PC-3 (cell line): ENCODE measurements at regions of chr3 and their contacts with region 1.

Region 1: DNA sequence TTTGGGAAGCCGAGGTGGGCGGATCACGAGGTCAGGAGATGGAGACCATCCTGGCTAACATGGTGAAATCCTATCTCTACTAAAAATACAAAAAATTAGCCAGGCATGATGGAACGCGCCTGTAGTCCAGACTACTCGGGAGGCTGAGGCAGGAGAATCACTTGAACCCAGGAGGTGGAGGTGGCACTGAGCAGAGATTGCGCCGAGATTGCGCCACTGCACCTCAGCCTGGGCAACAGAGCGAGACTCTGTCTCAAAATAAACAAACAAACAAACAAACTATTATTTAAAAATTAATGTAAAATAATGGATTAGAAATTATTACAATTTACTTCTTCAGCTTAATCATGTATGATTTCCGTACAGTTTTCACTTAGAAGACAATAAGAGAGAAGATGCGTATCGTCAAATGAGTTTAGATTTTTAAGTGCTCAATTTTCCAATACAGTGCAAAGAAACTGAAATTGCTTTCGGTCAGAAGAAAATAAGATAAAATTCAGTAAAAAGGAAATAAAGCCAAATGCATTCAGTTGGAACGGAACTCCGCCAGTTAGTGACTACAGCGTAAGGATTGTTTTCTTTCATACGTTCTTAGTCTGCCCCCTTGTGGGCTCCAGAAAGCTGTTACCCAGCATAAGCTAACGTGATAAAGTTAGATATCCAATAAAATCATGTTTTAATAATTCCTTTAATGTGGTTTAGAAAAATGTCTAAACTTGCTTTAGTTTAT is 24.8 kb downstream of the AADAC start:
- DNase-seq: peak; percentile 88
- ATAC-seq: peak; percentile 85
- H3K4me3 ChIP-seq: no peak overlapping the region
- H3K27ac ChIP-seq: no peak overlapping the region
- H3K4me1 ChIP-seq: peaks cover 34% of the 10 kb centered on the region
- H3K27me3 ChIP-seq: no peaks in the 10 kb centered on the region
- CTCF ChIP-seq: peak; percentile 92

Region 2: GRCh38 chr3:151290673-151291072 is 548.1 kb before region 1 on chr3:
- CTCF ChIA-PET with region 1: no interaction called
- POLR2A ChIA-PET with region 1: no interaction called
- intact Hi-C with region 1: loop called (anchors 1 kb)
- DNase-seq: peak; percentile 78
- ATAC-seq: peak; percentile 71
- H3K4me3 ChIP-seq: no peak overlapping the region
- H3K27ac ChIP-seq: no peak overlapping the region
- H3K4me1 ChIP-seq: no peaks in the 10 kb centered on the region
- H3K27me3 ChIP-seq: no peaks in the 10 kb centered on the region
- CTCF ChIP-seq: peak; percentile 91

Region 3: GRCh38 chr3:151468284-151468917 is 370.3 kb before region 1 on chr3:
- CTCF ChIA-PET with region 1: interaction called, 3 read pairs
- POLR2A ChIA-PET with region 1: no interaction called
- intact Hi-C with region 1: loop called (anchors 1 kb)
- DNase-seq: peak; percentile 90
- ATAC-seq: peak; percentile 98
- H3K4me3 ChIP-seq: no peak overlapping the region
- H3K27ac ChIP-seq: no peak overlapping the region
- H3K4me1 ChIP-seq: no peaks in the 10 kb centered on the region
- H3K27me3 ChIP-seq: no peaks in the 10 kb centered on the region
- CTCF ChIP-seq: peak; percentile 93

Region 4: GRCh38 chr3:151609491-151609890 is 229.3 kb before region 1 on chr3:
- CTCF ChIA-PET with region 1: no interaction called
- POLR2A ChIA-PET with region 1: no interaction called
- intact Hi-C with region 1: no loop called
- DNase-seq: no peak
- ATAC-seq: no peak
- H3K4me3 ChIP-seq: no peak overlapping the region
- H3K27ac ChIP-seq: no peak overlapping the region
- H3K4me1 ChIP-seq: no peaks in the 10 kb centered on the region
- H3K27me3 ChIP-seq: no peaks in the 10 kb centered on the region
- CTCF ChIP-seq: no peak

Region 5: DNA sequence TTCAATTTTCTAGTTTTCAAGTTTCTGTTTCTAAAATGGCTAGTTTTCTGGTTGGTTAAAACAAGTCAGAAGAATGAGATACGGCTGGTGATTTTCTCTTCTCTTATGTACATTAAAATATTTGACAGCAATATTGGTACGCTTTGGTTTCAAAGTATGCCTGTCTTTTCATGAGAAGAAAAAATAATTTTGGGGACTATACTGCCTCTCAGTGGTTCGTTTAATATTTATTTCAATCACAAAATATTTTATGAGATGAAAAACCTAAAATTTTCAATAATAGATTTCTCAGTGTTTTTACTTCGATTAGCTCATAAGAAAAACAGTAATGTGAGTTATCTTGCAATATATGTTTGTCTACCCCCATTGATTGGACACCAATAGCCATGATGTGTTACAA is 177.9 kb before region 1 on chr3:
- CTCF ChIA-PET with region 1: no interaction called
- POLR2A ChIA-PET with region 1: no interaction called
- intact Hi-C with region 1: loop called (anchors 1 kb)
- DNase-seq: peak; percentile 56
- ATAC-seq: no peak
- H3K4me3 ChIP-seq: no peak overlapping the region
- H3K27ac ChIP-seq: no peak overlapping the region
- H3K4me1 ChIP-seq: no peaks in the 10 kb centered on the region
- H3K27me3 ChIP-seq: no peaks in the 10 kb centered on the region
- CTCF ChIP-seq: peak; percentile 61

Region 6: DNA sequence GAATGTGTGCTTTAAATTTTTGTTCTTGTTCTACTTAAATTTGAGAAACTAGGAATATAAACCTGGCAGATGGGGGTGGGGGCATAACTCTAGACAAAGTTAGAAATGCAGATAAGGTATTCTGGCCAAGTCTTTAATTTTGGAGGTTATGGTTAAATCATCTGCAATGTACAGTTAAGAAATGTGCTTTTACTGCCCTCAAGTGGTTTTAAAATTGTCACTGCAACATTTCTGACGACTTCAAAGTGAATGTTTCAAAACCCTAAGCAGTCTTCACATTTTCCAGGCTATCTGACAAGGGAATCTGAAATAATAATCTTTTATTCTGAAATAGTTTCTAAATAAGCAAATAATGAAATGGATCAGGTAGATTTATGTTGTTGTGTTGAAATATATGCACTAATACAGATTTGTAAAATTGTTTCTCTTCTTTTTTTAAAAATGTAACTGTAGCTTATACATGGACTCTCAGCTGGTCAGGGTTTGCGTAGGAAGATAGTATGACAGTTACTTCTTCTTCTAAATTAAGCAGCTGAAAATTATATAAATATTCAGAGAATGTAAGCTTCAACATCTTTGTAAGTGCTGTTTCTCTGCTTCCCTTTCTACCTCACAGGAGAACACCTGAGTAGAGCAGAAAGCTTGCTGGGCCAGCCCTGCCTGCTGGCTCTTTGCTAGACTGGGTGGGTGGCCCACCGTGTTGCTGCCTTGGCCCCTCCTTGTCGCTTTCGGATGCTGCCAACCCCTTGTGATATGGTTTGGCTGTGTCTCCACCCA is 79.7 kb after region 1 on chr3:
- CTCF ChIA-PET with region 1: no interaction called
- POLR2A ChIA-PET with region 1: no interaction called
- intact Hi-C with region 1: loop called (anchors 1 kb)
- DNase-seq: peak; percentile 79
- ATAC-seq: peak; percentile 91
- H3K4me3 ChIP-seq: no peak overlapping the region
- H3K27ac ChIP-seq: no peak overlapping the region
- H3K4me1 ChIP-seq: peaks cover 8% of the 10 kb centered on the region
- H3K27me3 ChIP-seq: no peaks in the 10 kb centered on the region
- CTCF ChIP-seq: peak; percentile 85